Body of pancreas (tissue), 4 donors: ENCODE measurements at regions of chr12 and their contacts with region 1.

Region 1: DNA sequence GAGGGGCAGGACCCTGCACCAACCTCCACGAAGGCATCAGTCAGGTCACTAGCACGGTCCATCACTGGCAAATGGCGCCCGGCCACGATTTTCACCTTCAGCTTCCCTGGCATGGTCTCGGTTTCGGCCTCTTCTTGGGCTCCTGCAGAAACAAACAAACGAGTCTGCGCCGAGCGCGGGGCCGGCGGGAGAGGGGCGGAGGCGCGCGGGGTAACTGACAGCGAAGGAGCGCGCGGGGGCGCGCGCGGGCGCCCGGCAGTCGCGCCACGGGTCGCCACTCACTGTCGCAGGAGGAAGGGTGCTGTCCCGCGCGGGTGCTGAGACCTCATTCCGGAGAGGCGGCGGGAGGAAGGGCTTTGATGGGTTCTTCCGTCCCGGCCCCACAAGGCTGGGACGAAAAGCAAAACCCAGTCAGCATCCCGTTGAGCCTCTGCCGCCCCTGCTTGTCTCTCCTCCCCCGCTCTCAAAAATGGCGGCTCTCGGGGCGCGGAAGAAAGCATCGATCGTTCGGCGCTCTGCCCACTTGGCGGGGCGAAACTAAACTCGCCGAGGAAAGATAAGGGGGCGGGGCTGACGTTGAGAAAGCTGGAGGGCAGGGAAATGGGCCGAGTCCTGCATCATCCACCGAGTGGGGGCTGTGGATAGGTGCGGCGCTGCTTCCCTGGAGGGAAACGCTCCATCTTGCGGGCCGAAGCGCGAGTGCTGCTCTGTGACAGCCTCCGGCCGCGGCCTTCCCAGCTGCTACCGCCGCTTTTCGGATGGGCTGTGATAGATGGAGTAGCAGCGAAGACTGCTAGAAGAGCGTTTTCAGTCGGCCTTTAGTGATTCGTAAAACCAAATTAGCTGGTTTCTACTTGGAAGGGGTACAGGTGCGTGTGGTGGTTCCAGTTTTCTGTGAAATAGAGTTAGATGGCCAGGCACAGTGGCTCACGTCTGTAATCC is at the start of gene C2CD5:
- DNase-seq: peak; percentile 97 to 98 (median 98)
- ATAC-seq: peak; percentile 96
- H3K4me3 ChIP-seq: peak within 1 kb of the TSS; percentile 42 to 48
- H3K27ac ChIP-seq: peak within 1 kb of the TSS; percentile 93 to 95 (median 94)
- H3K4me1 ChIP-seq: peaks cover 21% of the 10 kb centered on the region
- H3K27me3 ChIP-seq: no peaks in the 10 kb centered on the region
- CTCF ChIP-seq: peak in 5 of 7 experiments; percentile 18 to 61 (median 30)
- POLR2A ChIP-seq: peak; percentile 78 to 92 (median 90)
- total RNA-seq, gene C2CD5: 12.2 to 32.9 TPM

Region 2: GRCh38 chr12:22624870-22625761 is 80.8 kb after region 1 on chr12 and contains the start of gene ETNK1:
- intact Hi-C with region 1: loop called (anchors 10 kb)
- DNase-seq: peak; percentile 95 to 96 (median 96)
- ATAC-seq: peak; percentile 99
- H3K4me3 ChIP-seq: peak within 1 kb of the TSS; percentile 21 to 65
- H3K27ac ChIP-seq: peak within 1 kb of the TSS; percentile 92 to 98 (median 96)
- H3K4me1 ChIP-seq: peaks cover 31% of the 10 kb centered on the region
- H3K27me3 ChIP-seq: no peaks in the 10 kb centered on the region
- CTCF ChIP-seq: peak in 1 of 7 experiments; percentile 16
- POLR2A ChIP-seq: peak; percentile 97 to 98 (median 98)
- total RNA-seq, gene ETNK1: 23.9 to 25.1 TPM